B cell (primary cell): ENCODE measurements at regions of chr12 and their contacts with region 1.

Region 1: GRCh38 chr12:94721173-94721572 is 70.8 kb upstream of the TMCC3 start:
- DNase-seq: peak; percentile 72
- ATAC-seq: peak; percentile 93
- H3K4me3 ChIP-seq: peak overlapping the region in 1 of 5 experiments; percentile 14
- H3K4me3 Mint-ChIP-seq: peak overlapping the region; percentile 58
- H3K27ac ChIP-seq: no peak overlapping the region
- H3K27ac Mint-ChIP-seq: peak overlapping the region; percentile 23
- H3K4me1 ChIP-seq: peaks cover 32 to 44% of the 10 kb centered on the region in 2 donors
- H3K4me1 Mint-ChIP-seq: peaks cover 51% of the 10 kb centered on the region
- H3K27me3 ChIP-seq: peaks cover 0 to 3% (median 0%) of the 10 kb centered on the region in 4 experiments
- H3K27me3 Mint-ChIP-seq: no peaks in the 10 kb centered on the region
- CTCF ChIP-seq: no peak

Region 2: GRCh38 chr12:94516985-94517384 is 204.2 kb before region 1 on chr12:
- CTCF ChIA-PET with region 1: no interaction called
- POLR2A ChIA-PET with region 1: no interaction called
- intact Hi-C with region 1: no loop called
- DNase-seq: no peak
- ATAC-seq: no peak
- H3K4me3 ChIP-seq: no peak overlapping the region
- H3K4me3 Mint-ChIP-seq: no peak overlapping the region
- H3K27ac ChIP-seq: no peak overlapping the region
- H3K27ac Mint-ChIP-seq: no peak overlapping the region
- H3K4me1 ChIP-seq: no peaks in the 10 kb centered on the region
- H3K4me1 Mint-ChIP-seq: no peaks in the 10 kb centered on the region
- H3K27me3 ChIP-seq: no peaks in the 10 kb centered on the region
- H3K27me3 Mint-ChIP-seq: no peaks in the 10 kb centered on the region
- CTCF ChIP-seq: no peak

Region 3: GRCh38 chr12:94603434-94604365 is 117.5 kb before region 1 on chr12:
- CTCF ChIA-PET with region 1: interaction called, 3 read pairs
- POLR2A ChIA-PET with region 1: no interaction called
- intact Hi-C with region 1: loop called (anchors 5 kb)
- DNase-seq: peak; percentile 68
- ATAC-seq: peak; percentile 70
- H3K4me3 ChIP-seq: no peak overlapping the region
- H3K4me3 Mint-ChIP-seq: no peak overlapping the region
- H3K27ac ChIP-seq: no peak overlapping the region
- H3K27ac Mint-ChIP-seq: no peak overlapping the region
- H3K4me1 ChIP-seq: no peaks in the 10 kb centered on the region
- H3K4me1 Mint-ChIP-seq: no peaks in the 10 kb centered on the region
- H3K27me3 ChIP-seq: no peaks in the 10 kb centered on the region
- H3K27me3 Mint-ChIP-seq: no peaks in the 10 kb centered on the region
- CTCF ChIP-seq: peak; percentile 77

Region 4: DNA sequence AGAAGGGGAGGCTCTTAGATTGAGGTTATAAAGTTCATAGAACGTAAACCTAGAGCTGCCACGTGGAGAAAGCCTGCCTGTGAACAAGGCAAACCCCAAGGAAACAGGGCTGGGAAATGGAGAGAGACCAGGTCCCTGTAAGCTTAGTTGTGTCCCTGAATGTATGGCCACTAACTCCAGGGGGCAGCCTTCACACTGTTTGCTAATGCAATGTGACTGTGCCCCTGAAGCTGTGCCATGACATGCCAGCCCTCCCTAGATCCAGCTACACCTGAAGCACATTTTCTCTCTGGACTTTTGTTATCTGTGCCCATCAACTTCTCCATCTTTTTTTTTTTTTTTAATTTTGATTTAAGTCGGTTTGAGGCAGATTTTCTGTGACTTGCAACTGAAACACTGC is 10.2 kb before region 1 on chr12:
- CTCF ChIA-PET with region 1: interaction called, 21 read pairs
- POLR2A ChIA-PET with region 1: no interaction called
- intact Hi-C with region 1: loop called (anchors 2 kb)
- DNase-seq: peak; percentile 57
- ATAC-seq: peak; percentile 71
- H3K4me3 ChIP-seq: no peak overlapping the region
- H3K4me3 Mint-ChIP-seq: no peak overlapping the region
- H3K27ac ChIP-seq: no peak overlapping the region
- H3K27ac Mint-ChIP-seq: no peak overlapping the region
- H3K4me1 ChIP-seq: peaks cover 8 to 9% of the 10 kb centered on the region in 2 donors
- H3K4me1 Mint-ChIP-seq: peaks cover 21% of the 10 kb centered on the region
- H3K27me3 ChIP-seq: no peaks in the 10 kb centered on the region
- H3K27me3 Mint-ChIP-seq: no peaks in the 10 kb centered on the region
- CTCF ChIP-seq: peak; percentile 57

Region 5: GRCh38 chr12:94762259-94762942 is 41.2 kb after region 1 on chr12:
- CTCF ChIA-PET with region 1: interaction called, 10 read pairs
- POLR2A ChIA-PET with region 1: interaction called, 3 read pairs
- intact Hi-C with region 1: no loop called
- DNase-seq: no peak
- ATAC-seq: peak; percentile 23
- H3K4me3 ChIP-seq: peak overlapping the region in 1 of 5 experiments; percentile 13
- H3K4me3 Mint-ChIP-seq: peak overlapping the region; percentile 51
- H3K27ac ChIP-seq: no peak overlapping the region
- H3K27ac Mint-ChIP-seq: no peak overlapping the region
- H3K4me1 ChIP-seq: peaks cover 34 to 39% of the 10 kb centered on the region in 2 donors
- H3K4me1 Mint-ChIP-seq: peaks cover 43% of the 10 kb centered on the region
- H3K27me3 ChIP-seq: no peaks in the 10 kb centered on the region
- H3K27me3 Mint-ChIP-seq: no peaks in the 10 kb centered on the region
- CTCF ChIP-seq: no peak

Region 6: DNA sequence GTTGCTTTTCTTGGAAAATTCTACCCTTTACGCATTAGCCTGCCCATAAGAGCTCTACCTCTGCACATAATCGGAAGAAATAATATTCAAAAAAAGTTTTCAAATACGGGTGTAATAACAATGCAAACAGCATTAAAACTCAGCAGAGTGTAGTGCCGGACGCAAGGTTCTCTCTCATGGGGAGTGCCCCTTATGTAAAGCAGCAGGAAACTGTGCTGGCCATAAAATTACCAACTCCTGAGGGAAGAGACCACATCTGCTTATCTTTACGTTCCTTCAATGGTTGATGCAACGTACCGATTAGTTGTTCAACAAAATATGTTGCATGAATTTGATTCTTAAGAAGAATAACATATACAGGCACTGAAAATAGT is 47.9 kb after region 1 on chr12:
- CTCF ChIA-PET with region 1: interaction called, 10 read pairs
- POLR2A ChIA-PET with region 1: no interaction called
- intact Hi-C with region 1: loop called (anchors 2 kb)
- DNase-seq: peak; percentile 74
- ATAC-seq: peak; percentile 89
- H3K4me3 ChIP-seq: peak overlapping the region; percentile 36 to 60 (median 54)
- H3K4me3 Mint-ChIP-seq: peak overlapping the region; percentile 90
- H3K27ac ChIP-seq: peak overlapping the region; percentile 69 to 70
- H3K27ac Mint-ChIP-seq: peak overlapping the region; percentile 82
- H3K4me1 ChIP-seq: peaks cover 50 to 54% of the 10 kb centered on the region in 2 donors
- H3K4me1 Mint-ChIP-seq: peaks cover 63% of the 10 kb centered on the region
- H3K27me3 ChIP-seq: no peaks in the 10 kb centered on the region
- H3K27me3 Mint-ChIP-seq: no peaks in the 10 kb centered on the region
- CTCF ChIP-seq: no peak

Region 7: GRCh38 chr12:94817695-94818075 is 96.5 kb after region 1 on chr12:
- CTCF ChIA-PET with region 1: interaction called, 3 read pairs
- POLR2A ChIA-PET with region 1: no interaction called
- intact Hi-C with region 1: loop called (anchors 5 kb)
- DNase-seq: no peak
- ATAC-seq: no peak
- H3K4me3 ChIP-seq: peak overlapping the region; percentile 39 to 66 (median 51)
- H3K4me3 Mint-ChIP-seq: peak overlapping the region; percentile 83
- H3K27ac ChIP-seq: peak overlapping the region; percentile 86 to 90
- H3K27ac Mint-ChIP-seq: peak overlapping the region; percentile 95
- H3K4me1 ChIP-seq: peaks cover 60 to 62% of the 10 kb centered on the region in 2 donors
- H3K4me1 Mint-ChIP-seq: peaks cover 61% of the 10 kb centered on the region
- H3K27me3 ChIP-seq: no peaks in the 10 kb centered on the region
- H3K27me3 Mint-ChIP-seq: no peaks in the 10 kb centered on the region
- CTCF ChIP-seq: no peak